CD4-positive, alpha-beta memory T cell (primary cell): ENCODE measurements at regions of chr14 and their contacts with region 1.

Region 1: DNA sequence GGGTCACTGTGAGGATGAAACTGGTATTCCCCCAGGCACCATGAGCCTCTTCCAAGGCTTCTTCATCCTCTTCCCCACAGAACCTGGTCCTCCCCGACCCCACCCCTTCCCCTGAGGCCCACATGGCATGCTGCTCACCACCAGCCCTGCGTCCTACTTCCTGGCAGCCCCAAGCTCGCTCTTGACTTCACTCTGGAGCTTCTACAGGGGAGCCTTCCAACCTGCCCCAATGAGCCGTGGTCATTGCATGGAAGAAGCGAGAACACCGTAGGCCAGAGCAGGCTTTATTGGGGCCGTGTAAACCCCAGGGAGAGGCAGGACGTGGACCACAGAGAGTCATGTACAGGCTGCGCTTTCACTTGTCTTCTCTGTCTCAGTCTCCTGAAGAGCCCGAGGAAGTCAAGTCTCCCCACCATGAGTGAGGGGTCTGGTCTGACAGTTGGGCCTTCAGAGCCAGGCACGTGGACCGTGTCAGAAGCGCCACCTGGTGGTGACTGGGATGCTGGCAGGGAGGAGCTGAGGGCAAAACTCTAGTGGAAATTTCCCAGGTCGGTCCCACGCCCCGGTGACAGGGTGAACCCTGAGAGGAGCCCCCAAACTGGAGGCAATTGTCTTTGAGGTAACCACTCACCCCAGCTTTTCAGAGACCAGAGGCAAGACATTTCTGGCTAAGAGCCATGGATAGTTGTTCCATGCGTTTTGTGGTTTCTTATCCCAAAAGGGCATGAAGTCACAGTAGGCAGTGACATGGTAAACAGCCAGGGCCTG is 17.5 kb downstream of the RPS6KL1 start:
- DNase-seq: peak; percentile 63 to 77 (median 69)
- H3K4me3 ChIP-seq: no peak overlapping the region
- H3K4me3 Mint-ChIP-seq: no peak overlapping the region
- H3K27ac ChIP-seq: no peak overlapping the region
- H3K27ac Mint-ChIP-seq: peak overlapping the region; percentile 42 to 77 (median 67)
- H3K4me1 ChIP-seq: peaks cover 4% of the 10 kb centered on the region
- H3K4me1 Mint-ChIP-seq: peaks cover 0 to 15% (median 7%) of the 10 kb centered on the region in 4 donors
- H3K27me3 ChIP-seq: no peaks in the 10 kb centered on the region
- H3K27me3 Mint-ChIP-seq: no peaks in the 10 kb centered on the region

Region 2: GRCh38 chr14:74846968-74847665 is 58.4 kb before region 1 on chr14:
- CTCF ChIA-PET with region 1: interaction called, 677 read pairs
- POLR2A ChIA-PET with region 1: no interaction called
- intact Hi-C with region 1: no loop called
- DNase-seq: no peak
- H3K4me3 ChIP-seq: no peak overlapping the region
- H3K4me3 Mint-ChIP-seq: no peak overlapping the region
- H3K27ac ChIP-seq: no peak overlapping the region
- H3K27ac Mint-ChIP-seq: no peak overlapping the region
- H3K4me1 ChIP-seq: peaks cover 4% of the 10 kb centered on the region
- H3K4me1 Mint-ChIP-seq: peaks cover 5 to 15% (median 10%) of the 10 kb centered on the region in 4 donors
- H3K27me3 ChIP-seq: no peaks in the 10 kb centered on the region
- H3K27me3 Mint-ChIP-seq: no peaks in the 10 kb centered on the region

Region 3: GRCh38 chr14:74867673-74868072 is 37.9 kb before region 1 on chr14:
- CTCF ChIA-PET with region 1: interaction called, 677 read pairs
- POLR2A ChIA-PET with region 1: interaction called, 70 read pairs
- intact Hi-C with region 1: no loop called
- DNase-seq: peak; percentile 41 to 66 (median 47)
- H3K4me3 ChIP-seq: no peak overlapping the region
- H3K4me3 Mint-ChIP-seq: peak overlapping the region in 7 of 8 donors; percentile 21 to 77 (median 56)
- H3K27ac ChIP-seq: no peak overlapping the region
- H3K27ac Mint-ChIP-seq: peak overlapping the region; percentile 28 to 88 (median 59)
- H3K4me1 ChIP-seq: peaks cover 16% of the 10 kb centered on the region
- H3K4me1 Mint-ChIP-seq: peaks cover 18 to 25% (median 21%) of the 10 kb centered on the region in 4 donors
- H3K27me3 ChIP-seq: no peaks in the 10 kb centered on the region
- H3K27me3 Mint-ChIP-seq: no peaks in the 10 kb centered on the region

Region 4: GRCh38 chr14:74893614-74894091 is 11.9 kb before region 1 on chr14:
- CTCF ChIA-PET with region 1: interaction called, 64 read pairs
- POLR2A ChIA-PET with region 1: interaction called, 3 read pairs
- intact Hi-C with region 1: no loop called
- DNase-seq: no peak
- H3K4me3 ChIP-seq: no peak overlapping the region
- H3K4me3 Mint-ChIP-seq: no peak overlapping the region
- H3K27ac ChIP-seq: no peak overlapping the region
- H3K27ac Mint-ChIP-seq: peak overlapping the region in 4 of 7 donors; percentile 4 to 51 (median 36)
- H3K4me1 ChIP-seq: peaks cover 2% of the 10 kb centered on the region
- H3K4me1 Mint-ChIP-seq: peaks cover 4 to 10% (median 9%) of the 10 kb centered on the region in 4 donors
- H3K27me3 ChIP-seq: no peaks in the 10 kb centered on the region
- H3K27me3 Mint-ChIP-seq: no peaks in the 10 kb centered on the region

Region 5: GRCh38 chr14:74945823-74946682 is 40.5 kb after region 1 on chr14:
- CTCF ChIA-PET with region 1: interaction called, 19 read pairs
- POLR2A ChIA-PET with region 1: no interaction called
- intact Hi-C with region 1: no loop called
- DNase-seq: peak; percentile 62 to 74 (median 63)
- H3K4me3 ChIP-seq: no peak overlapping the region
- H3K4me3 Mint-ChIP-seq: peak overlapping the region in 5 of 8 donors; percentile 22 to 81 (median 63)
- H3K27ac ChIP-seq: no peak overlapping the region
- H3K27ac Mint-ChIP-seq: peak overlapping the region; percentile 21 to 93 (median 70)
- H3K4me1 ChIP-seq: peaks cover 37% of the 10 kb centered on the region
- H3K4me1 Mint-ChIP-seq: peaks cover 13 to 32% (median 30%) of the 10 kb centered on the region in 4 donors
- H3K27me3 ChIP-seq: no peaks in the 10 kb centered on the region
- H3K27me3 Mint-ChIP-seq: peaks cover 0 to 2% of the 10 kb centered on the region in 2 donors